Mammary epithelial cell (primary cell): ENCODE measurements at regions of chr12 and their contacts with region 1.

Region 1: GRCh38 chr12:6285063-6285477 is 25.4 kb upstream of the PLEKHG6 start:
- DNase-seq: peak; percentile 48
- H3K4me3 ChIP-seq: no peak overlapping the region
- H3K27ac ChIP-seq: peak overlapping the region; percentile 81
- H3K4me1 ChIP-seq: peaks cover 49% of the 10 kb centered on the region
- H3K27me3 ChIP-seq: no peaks in the 10 kb centered on the region
- CTCF ChIP-seq: peak; percentile 94 to 95

Region 2: GRCh38 chr12:4330203-4330602 is 1954.9 kb before region 1 on chr12:
- CTCF ChIA-PET with region 1: no interaction called
- dilution Hi-C with region 1: no loop called
- in situ Hi-C with region 1: no loop called
- intact Hi-C with region 1: no loop called
- DNase-seq: no peak
- H3K4me3 ChIP-seq: no peak overlapping the region
- H3K27ac ChIP-seq: no peak overlapping the region
- H3K4me1 ChIP-seq: peaks cover 6% of the 10 kb centered on the region
- H3K27me3 ChIP-seq: no peaks in the 10 kb centered on the region
- CTCF ChIP-seq: no peak

Region 3: DNA sequence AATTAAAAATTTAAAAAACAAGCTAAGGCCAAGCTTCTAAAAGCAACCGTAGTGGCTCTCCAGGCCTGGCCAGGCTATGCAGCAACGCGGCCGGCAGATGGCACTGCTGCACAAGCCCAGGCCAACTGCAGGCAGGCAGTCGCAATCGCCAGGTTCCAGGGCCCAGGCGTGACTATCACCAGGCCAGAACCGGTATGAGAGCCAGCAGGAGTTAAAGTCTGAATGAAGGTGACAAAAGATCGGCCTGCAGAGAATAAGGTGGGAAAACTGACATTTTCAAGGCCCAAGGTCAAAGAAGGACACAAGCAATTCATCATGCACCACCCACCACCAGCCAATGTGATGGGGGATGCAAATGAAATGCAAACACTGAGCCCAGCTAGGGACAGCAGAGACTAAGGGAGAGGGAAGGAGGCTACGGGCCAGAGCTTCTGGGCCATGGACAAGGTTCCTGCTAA is 296.4 kb before region 1 on chr12:
- CTCF ChIA-PET with region 1: interaction called, 4 read pairs
- dilution Hi-C with region 1: no loop called
- in situ Hi-C with region 1: no loop called
- intact Hi-C with region 1: loop called (anchors 1 kb)
- DNase-seq: peak; percentile 54
- H3K4me3 ChIP-seq: no peak overlapping the region
- H3K27ac ChIP-seq: no peak overlapping the region
- H3K4me1 ChIP-seq: no peaks in the 10 kb centered on the region
- H3K27me3 ChIP-seq: no peaks in the 10 kb centered on the region
- CTCF ChIP-seq: peak; percentile 97

Region 4: GRCh38 chr12:6068227-6068626 is 216.8 kb before region 1 on chr12:
- CTCF ChIA-PET with region 1: interaction called, 11 read pairs
- dilution Hi-C with region 1: no loop called
- in situ Hi-C with region 1: loop called in 1 of 2 experiments (anchors 5 kb)
- intact Hi-C with region 1: loop called (anchors 1 kb)
- DNase-seq: no peak
- H3K4me3 ChIP-seq: no peak overlapping the region
- H3K27ac ChIP-seq: no peak overlapping the region
- H3K4me1 ChIP-seq: peaks cover 9% of the 10 kb centered on the region
- H3K27me3 ChIP-seq: no peaks in the 10 kb centered on the region
- CTCF ChIP-seq: no peak

Region 5: GRCh38 chr12:6205144-6205539 is 79.9 kb before region 1 on chr12:
- CTCF ChIA-PET with region 1: interaction called, 16 read pairs
- dilution Hi-C with region 1: no loop called
- in situ Hi-C with region 1: no loop called
- intact Hi-C with region 1: loop called (anchors 1 kb)
- DNase-seq: no peak
- H3K4me3 ChIP-seq: no peak overlapping the region
- H3K27ac ChIP-seq: peak overlapping the region; percentile 18
- H3K4me1 ChIP-seq: peaks cover 48% of the 10 kb centered on the region
- H3K27me3 ChIP-seq: no peaks in the 10 kb centered on the region
- CTCF ChIP-seq: no peak

Region 6: DNA sequence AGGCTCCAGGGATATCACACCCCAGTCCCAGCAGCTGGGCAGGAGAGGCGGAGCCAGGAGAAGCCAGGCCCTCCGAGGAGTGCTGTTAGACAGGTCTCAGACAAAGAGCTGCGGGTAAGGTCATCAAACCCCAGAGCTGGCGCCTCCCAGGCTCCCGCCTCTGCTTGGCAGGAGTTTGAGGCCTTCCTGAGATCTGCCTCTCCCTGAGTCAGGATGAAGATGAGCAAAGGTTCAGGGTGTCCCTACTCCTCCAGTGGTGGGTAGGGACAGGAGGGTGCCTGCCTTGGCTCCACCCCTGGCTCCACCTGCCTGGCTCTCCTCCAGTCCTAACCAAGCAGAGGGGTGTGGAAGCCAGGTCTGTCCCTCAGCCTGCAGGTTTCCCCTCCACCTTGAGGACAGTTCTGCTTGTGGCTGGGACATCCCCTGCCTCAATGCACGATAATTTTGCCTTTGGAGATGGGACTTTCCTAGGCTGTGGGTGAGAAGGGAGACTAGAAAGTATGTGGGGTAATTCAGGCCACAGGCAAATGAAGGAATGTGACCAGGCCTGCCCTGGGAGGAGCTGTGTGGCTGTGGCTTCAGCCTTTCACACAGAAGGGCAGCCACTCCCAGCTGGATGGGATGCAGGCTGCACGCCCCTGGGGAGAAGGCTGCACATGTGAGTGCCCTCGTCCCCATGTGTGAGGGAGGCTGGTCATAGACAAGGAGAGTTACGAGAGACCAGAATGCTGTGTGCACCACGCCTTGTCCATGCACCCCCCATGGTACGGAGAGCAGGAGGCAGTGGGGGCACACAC is 27.7 kb after region 1 on chr12:
- CTCF ChIA-PET with region 1: interaction called, 4 read pairs
- dilution Hi-C with region 1: no loop called
- in situ Hi-C with region 1: no loop called
- intact Hi-C with region 1: loop called (anchors 1 kb)
- DNase-seq: peak; percentile 96
- H3K4me3 ChIP-seq: no peak overlapping the region
- H3K27ac ChIP-seq: peak overlapping the region; percentile 54
- H3K4me1 ChIP-seq: peaks cover 37% of the 10 kb centered on the region
- H3K27me3 ChIP-seq: no peaks in the 10 kb centered on the region
- CTCF ChIP-seq: no peak

Region 7: GRCh38 chr12:6376079-6376869 is 91.2 kb after region 1 on chr12:
- CTCF ChIA-PET with region 1: no interaction called
- dilution Hi-C with region 1: no loop called
- in situ Hi-C with region 1: no loop called
- intact Hi-C with region 1: loop called (anchors 2 kb)
- DNase-seq: peak; percentile 90
- H3K4me3 ChIP-seq: peak overlapping the region; percentile 64 to 90 (median 87)
- H3K27ac ChIP-seq: peak overlapping the region; percentile 92
- H3K4me1 ChIP-seq: peaks cover 41% of the 10 kb centered on the region
- H3K27me3 ChIP-seq: no peaks in the 10 kb centered on the region
- CTCF ChIP-seq: peak; percentile 29 to 64

Region 8: DNA sequence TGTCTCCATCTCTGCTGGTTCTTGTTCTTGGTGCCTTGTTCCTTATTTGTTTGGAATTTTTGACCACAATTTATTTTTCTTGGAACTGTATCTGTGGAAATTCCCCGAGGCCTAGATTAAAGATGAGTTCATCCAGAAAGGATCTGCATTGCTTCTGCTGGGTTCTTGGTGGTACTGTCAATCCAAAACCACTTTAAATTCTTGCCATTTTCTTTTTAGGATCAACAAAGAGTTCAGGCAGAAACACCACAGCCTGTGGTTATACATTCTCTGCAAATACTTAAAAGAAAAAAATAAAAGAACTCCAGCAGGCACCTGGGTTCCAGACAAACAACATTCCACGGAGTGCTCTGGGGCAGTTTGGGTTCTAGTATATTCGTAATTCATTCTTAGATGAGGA is 191.4 kb after region 1 on chr12:
- CTCF ChIA-PET with region 1: no interaction called
- dilution Hi-C with region 1: no loop called
- in situ Hi-C with region 1: no loop called
- intact Hi-C with region 1: no loop called
- DNase-seq: peak; percentile 48
- H3K4me3 ChIP-seq: no peak overlapping the region
- H3K27ac ChIP-seq: no peak overlapping the region
- H3K4me1 ChIP-seq: peaks cover 10% of the 10 kb centered on the region
- H3K27me3 ChIP-seq: no peaks in the 10 kb centered on the region
- CTCF ChIP-seq: no peak